Endothelial cell of umbilical vein (primary cell): ENCODE measurements at regions of chr2 and their contacts with region 1.

Region 1: DNA sequence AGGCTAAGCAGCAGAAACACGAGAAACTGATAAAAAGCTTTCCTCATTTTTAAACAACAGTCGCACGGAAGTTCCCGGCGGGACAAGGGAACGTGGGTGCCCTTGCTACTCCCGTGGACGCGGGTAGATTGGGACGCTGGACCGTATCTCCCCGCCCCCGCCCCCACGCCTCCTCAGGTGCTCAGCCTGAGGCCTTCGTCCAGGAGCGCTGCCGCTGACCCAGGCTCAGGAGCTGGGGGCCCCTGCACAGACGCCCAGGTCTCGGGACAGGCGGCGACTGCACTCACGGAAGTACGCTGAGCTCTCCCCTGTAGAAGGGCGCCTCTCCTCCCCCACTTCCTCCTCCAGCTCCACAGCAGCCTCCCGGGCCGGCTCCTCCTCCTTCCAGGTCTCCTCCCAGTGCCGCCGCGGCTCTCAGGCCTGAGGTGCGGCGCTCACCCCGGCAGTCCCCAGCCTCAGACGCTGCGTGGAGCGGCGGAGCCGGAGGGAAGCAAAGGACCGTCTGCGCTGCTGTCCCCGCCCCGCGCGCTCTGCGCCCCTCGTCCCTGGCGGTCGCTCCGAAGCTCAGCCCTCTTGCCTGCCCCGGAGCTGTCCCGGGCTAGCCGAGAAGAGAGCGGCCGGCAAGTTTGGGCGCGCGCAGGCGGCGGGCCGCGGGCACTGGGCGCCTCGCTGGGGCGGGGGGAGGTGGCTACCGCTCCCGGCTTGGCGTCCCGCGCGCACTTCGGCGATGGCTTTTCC is at the start of gene ITGAV:
- DNase-seq: peak; percentile 93
- H3K4me3 ChIP-seq: peak within 1 kb of the TSS; percentile 76 to 96 (median 83)
- H3K27ac ChIP-seq: peak within 1 kb of the TSS; percentile 97
- H3K4me1 ChIP-seq: peaks cover 32% of the 10 kb centered on the region
- H3K27me3 ChIP-seq: no peaks in the 10 kb centered on the region
- CTCF ChIP-seq: no peak
- POLR2A ChIP-seq: peak; percentile 94
- total RNA-seq, gene ITGAV: 131 and 135 TPM in 2 replicates

Region 2: GRCh38 chr2:185466915-185467314 is 1122.9 kb before region 1 on chr2:
- CTCF ChIA-PET with region 1: no interaction called
- POLR2A ChIA-PET with region 1: no interaction called
- dilution Hi-C with region 1: no loop called
- intact Hi-C with region 1: no loop called
- DNase-seq: no peak
- H3K4me3 ChIP-seq: no peak overlapping the region
- H3K27ac ChIP-seq: no peak overlapping the region
- H3K4me1 ChIP-seq: no peaks in the 10 kb centered on the region
- H3K27me3 ChIP-seq: no peaks in the 10 kb centered on the region
- CTCF ChIP-seq: no peak
- POLR2A ChIP-seq: no peak

Region 3: GRCh38 chr2:186485871-186486650 is 103.7 kb before region 1 on chr2 and contains the start of gene ZC3H15:
- CTCF ChIA-PET with region 1: no interaction called
- POLR2A ChIA-PET with region 1: interaction called, 3 read pairs
- dilution Hi-C with region 1: no loop called
- intact Hi-C with region 1: loop called (anchors 1 kb)
- DNase-seq: peak; percentile 97
- H3K4me3 ChIP-seq: peak within 1 kb of the TSS; percentile 71 to 98 (median 84)
- H3K27ac ChIP-seq: peak within 1 kb of the TSS; percentile 89
- H3K4me1 ChIP-seq: peaks cover 19% of the 10 kb centered on the region
- H3K27me3 ChIP-seq: no peaks in the 10 kb centered on the region
- CTCF ChIP-seq: no peak
- POLR2A ChIP-seq: peak; percentile 95
- total RNA-seq, gene ZC3H15: 64.5 and 65.1 TPM in 2 replicates

Region 4: GRCh38 chr2:186532891-186533290 is 56.9 kb before region 1 on chr2:
- CTCF ChIA-PET with region 1: no interaction called
- POLR2A ChIA-PET with region 1: no interaction called
- dilution Hi-C with region 1: no loop called
- intact Hi-C with region 1: loop called (anchors 2 kb)
- DNase-seq: peak; percentile 76
- H3K4me3 ChIP-seq: no peak overlapping the region
- H3K27ac ChIP-seq: peak overlapping the region; percentile 69
- H3K4me1 ChIP-seq: peaks cover 19% of the 10 kb centered on the region
- H3K27me3 ChIP-seq: no peaks in the 10 kb centered on the region
- CTCF ChIP-seq: no peak
- POLR2A ChIP-seq: no peak

Region 5: GRCh38 chr2:186544255-186544675 is 45.5 kb before region 1 on chr2:
- CTCF ChIA-PET with region 1: interaction called, 9 read pairs
- POLR2A ChIA-PET with region 1: interaction called, 9 read pairs
- dilution Hi-C with region 1: no loop called
- intact Hi-C with region 1: loop called (anchors 1 kb)
- DNase-seq: peak; percentile 98
- H3K4me3 ChIP-seq: peak overlapping the region in 1 of 3 experiments; percentile 15
- H3K27ac ChIP-seq: peak overlapping the region; percentile 98
- H3K4me1 ChIP-seq: peaks cover 35% of the 10 kb centered on the region
- H3K27me3 ChIP-seq: no peaks in the 10 kb centered on the region
- CTCF ChIP-seq: no peak
- POLR2A ChIP-seq: peak; percentile 31

Region 6: DNA sequence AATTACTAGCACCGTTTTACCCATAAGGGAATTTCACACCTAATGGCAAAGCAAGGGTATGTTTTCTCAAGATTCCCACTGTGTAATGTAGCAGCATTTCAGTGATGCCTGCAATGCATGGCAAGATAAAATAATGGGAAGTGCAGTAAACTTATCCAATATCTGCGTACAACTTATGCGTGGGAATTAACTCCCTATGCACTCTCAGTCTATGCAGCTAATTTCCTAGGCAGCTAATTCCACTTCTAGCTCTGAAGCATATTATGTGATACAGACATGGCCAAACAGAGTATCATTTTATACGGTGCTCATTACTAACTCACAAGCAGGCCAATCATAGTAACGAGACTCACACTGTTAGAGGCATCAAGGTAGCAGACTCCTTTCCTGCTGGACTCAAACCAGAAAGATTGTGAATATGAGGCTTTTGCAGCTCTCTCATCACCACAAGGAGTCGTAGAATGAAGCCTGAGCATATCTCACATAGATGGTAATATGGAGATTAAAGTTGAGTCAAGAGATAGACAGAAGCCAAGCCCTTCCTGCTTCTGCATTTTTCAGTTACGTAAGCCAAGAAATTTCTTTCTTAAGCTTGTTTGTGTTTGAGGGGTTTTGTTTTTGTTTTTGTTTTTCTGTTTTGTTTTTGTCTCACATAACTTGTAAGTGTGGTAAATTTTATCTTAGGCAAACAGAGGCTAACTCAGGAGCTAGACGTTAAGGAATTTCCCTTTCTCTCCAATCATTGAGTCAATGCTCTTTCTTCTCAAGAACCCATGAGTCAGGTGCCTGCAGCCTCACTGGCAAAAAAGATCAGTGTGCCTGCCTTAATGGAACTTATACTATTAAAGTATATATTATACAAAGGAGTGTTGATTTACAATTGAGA is 34.7 kb before region 1 on chr2:
- CTCF ChIA-PET with region 1: interaction called, 4 read pairs
- POLR2A ChIA-PET with region 1: interaction called, 7 read pairs
- dilution Hi-C with region 1: no loop called
- intact Hi-C with region 1: loop called (anchors 2 kb)
- DNase-seq: peak; percentile 55
- H3K4me3 ChIP-seq: no peak overlapping the region
- H3K27ac ChIP-seq: no peak overlapping the region
- H3K4me1 ChIP-seq: peaks cover 6% of the 10 kb centered on the region
- H3K27me3 ChIP-seq: no peaks in the 10 kb centered on the region
- CTCF ChIP-seq: no peak
- POLR2A ChIP-seq: no peak

Region 7: DNA sequence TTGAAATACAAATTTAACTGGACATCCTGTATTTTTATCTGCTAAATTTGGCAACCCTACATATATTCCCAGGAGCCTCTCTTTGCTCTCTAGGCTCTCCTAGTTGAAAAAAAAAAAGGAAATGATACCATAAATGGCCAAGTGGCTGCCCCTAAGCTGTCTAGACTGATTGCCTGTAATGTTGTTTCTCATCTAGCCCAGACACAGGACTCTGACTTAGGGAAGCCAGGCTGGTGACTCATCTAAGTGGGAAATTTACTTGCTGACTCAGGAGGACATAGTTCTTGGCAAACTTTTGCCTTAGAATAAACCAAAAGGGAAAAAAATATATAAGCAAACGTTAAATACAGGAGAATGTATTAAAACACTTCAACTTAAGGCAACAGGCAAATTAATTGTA is 14.5 kb before region 1 on chr2:
- CTCF ChIA-PET with region 1: interaction called, 12 read pairs
- POLR2A ChIA-PET with region 1: interaction called, 10 read pairs
- dilution Hi-C with region 1: no loop called
- intact Hi-C with region 1: loop called (anchors 1 kb)
- DNase-seq: peak; percentile 98
- H3K4me3 ChIP-seq: no peak overlapping the region
- H3K27ac ChIP-seq: peak overlapping the region; percentile 82
- H3K4me1 ChIP-seq: peaks cover 24% of the 10 kb centered on the region
- H3K27me3 ChIP-seq: no peaks in the 10 kb centered on the region
- CTCF ChIP-seq: no peak
- POLR2A ChIP-seq: no peak

Region 8: GRCh38 chr2:186641807-186642321 is 52.1 kb after region 1 on chr2:
- CTCF ChIA-PET with region 1: interaction called, 5 read pairs
- POLR2A ChIA-PET with region 1: interaction called, 3 read pairs
- dilution Hi-C with region 1: no loop called
- intact Hi-C with region 1: loop called (anchors 1 kb)
- DNase-seq: peak; percentile 84
- H3K4me3 ChIP-seq: no peak overlapping the region
- H3K27ac ChIP-seq: no peak overlapping the region
- H3K4me1 ChIP-seq: no peaks in the 10 kb centered on the region
- H3K27me3 ChIP-seq: no peaks in the 10 kb centered on the region
- CTCF ChIP-seq: peak; percentile 59
- POLR2A ChIP-seq: no peak

Region 9: GRCh38 chr2:186952026-186952425 is 362.2 kb after region 1 on chr2:
- CTCF ChIA-PET with region 1: no interaction called
- POLR2A ChIA-PET with region 1: no interaction called
- dilution Hi-C with region 1: no loop called
- intact Hi-C with region 1: no loop called
- DNase-seq: no peak
- H3K4me3 ChIP-seq: peak overlapping the region; percentile 6 to 56 (median 35)
- H3K27ac ChIP-seq: no peak overlapping the region
- H3K4me1 ChIP-seq: no peaks in the 10 kb centered on the region
- H3K27me3 ChIP-seq: no peaks in the 10 kb centered on the region
- CTCF ChIP-seq: no peak
- POLR2A ChIP-seq: no peak